ENCODE measurements at regions of chr16 and their contacts with region 1.

Region 1: GRCh38 chr16:3983081-3983520 is 102.6 kb upstream of the CREBBP start:
- DNase-seq: peak; percentile 79
- H3K4me3 ChIP-seq: no peak overlapping the region
- H3K27ac ChIP-seq: no peak overlapping the region
- H3K4me1 ChIP-seq: no peaks in the 10 kb centered on the region
- H3K27me3 ChIP-seq: no peaks in the 10 kb centered on the region
- CTCF ChIP-seq: peak in 3 of 4 experiments; percentile 74 to 88 (median 85)
- POLR2A ChIP-seq: no peak

Region 2: DNA sequence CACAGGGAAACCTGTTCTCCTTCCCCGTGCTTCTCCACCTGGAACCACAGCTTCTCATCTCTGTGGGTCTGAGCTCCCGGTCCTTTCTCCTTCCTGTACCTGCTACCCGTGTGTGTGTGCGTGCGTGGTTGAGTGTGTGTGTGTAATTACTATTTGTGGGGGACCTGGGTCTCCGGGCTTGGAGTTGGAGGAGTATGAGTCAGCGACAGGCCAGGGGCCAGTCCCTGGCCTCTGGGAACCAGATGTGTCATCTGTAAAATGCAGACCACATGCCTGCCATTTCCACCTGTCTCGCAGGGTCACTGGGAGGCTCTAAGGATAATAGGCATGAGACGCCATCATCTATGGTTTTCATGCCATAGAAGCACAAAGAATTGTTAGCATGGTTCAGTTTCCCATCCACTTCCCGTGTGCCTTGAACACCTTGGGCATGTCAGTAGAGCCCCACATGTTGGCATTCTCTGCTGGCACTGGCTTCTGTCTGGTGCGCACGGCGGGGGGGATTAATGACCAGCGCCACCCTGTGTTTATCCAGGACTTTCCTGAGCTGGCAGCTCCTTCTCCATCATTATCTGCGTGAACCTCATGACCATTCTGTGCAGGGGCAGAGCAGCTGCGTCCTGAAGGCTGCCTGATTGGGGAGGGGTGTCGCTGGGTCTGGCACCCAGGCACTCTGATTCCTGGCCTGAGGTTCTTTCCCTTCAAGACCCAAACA is 869.2 kb before region 1 on chr16:
- intact Hi-C with region 1: no loop called
- DNase-seq: no peak
- H3K4me3 ChIP-seq: peak overlapping the region in 1 of 2 donors; percentile 57
- H3K27ac ChIP-seq: no peak overlapping the region
- H3K4me1 ChIP-seq: peaks cover 8% of the 10 kb centered on the region
- H3K27me3 ChIP-seq: no peaks in the 10 kb centered on the region
- CTCF ChIP-seq: no peak
- POLR2A ChIP-seq: no peak

Region 3: DNA sequence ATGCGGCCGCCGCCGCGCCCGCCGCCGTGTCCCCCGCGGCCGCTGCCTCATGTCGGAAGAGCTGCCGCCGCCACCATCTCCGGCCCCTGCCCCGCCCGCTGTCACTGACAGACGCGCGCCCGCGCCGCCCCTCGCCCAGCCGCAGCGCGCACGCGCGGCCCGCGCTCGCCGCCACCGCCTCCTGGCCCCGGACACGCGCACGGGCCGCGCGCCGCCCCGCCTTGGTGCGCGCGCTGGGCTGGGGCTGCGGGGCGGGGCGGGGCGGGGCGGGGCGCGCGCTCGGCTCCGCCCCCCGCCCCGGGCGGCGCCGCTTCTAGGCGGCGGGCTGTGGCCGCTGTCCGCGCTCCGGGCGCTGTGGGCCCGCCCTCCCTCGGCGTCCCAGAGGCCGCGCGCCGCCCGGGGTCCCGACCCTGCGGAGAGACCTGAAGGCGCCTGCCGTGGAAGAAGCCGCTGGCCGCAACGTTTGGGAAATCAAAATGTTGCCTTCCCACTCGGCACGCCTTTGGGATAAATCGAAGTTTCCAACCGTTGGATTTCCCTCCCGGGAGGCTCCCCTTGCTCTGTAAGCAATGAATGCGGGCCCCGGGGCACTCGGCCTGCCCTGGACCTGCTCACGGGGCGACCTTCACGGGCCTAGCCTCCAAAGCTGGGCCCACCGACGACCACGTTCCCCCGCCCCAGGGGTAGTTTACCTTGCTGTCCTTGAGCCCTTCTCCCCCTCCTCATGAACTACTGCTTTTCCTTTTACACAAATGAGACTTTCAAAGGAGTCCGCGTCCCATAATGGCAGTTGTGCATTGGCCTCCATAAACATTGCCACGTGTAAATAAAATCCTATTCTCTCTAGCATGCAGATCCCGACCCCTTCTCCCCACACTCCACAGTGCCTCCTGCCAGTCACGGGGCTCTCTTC is 133.5 kb after region 1 on chr16 and contains the start of gene ADCY9:
- intact Hi-C with region 1: loop called (anchors 5 kb)
- DNase-seq: peak; percentile 75
- H3K4me3 ChIP-seq: peak within 1 kb of the TSS; percentile 44 to 49
- H3K27ac ChIP-seq: peak within 1 kb of the TSS; percentile 47 to 60
- H3K4me1 ChIP-seq: no peaks in the 10 kb centered on the region
- H3K27me3 ChIP-seq: no peaks in the 10 kb centered on the region
- CTCF ChIP-seq: peak in 1 of 4 experiments; percentile 8
- POLR2A ChIP-seq: peak; percentile 32
- total RNA-seq, gene ADCY9: 7.2 to 58.3 TPM

Region 4: GRCh38 chr16:4183237-4184036 is 200.3 kb after region 1 on chr16:
- intact Hi-C with region 1: loop called (anchors 5 kb)
- DNase-seq: peak; percentile 87
- H3K4me3 ChIP-seq: peak overlapping the region; percentile 62 to 73
- H3K27ac ChIP-seq: peak overlapping the region; percentile 91 to 98
- H3K4me1 ChIP-seq: no peaks in the 10 kb centered on the region
- H3K27me3 ChIP-seq: no peaks in the 10 kb centered on the region
- CTCF ChIP-seq: peak in 2 of 4 experiments; percentile 23 to 27
- POLR2A ChIP-seq: peak; percentile 84

Region 5: GRCh38 chr16:4330277-4330874 is 347.3 kb after region 1 on chr16:
- intact Hi-C with region 1: loop called (anchors 5 kb)
- DNase-seq: peak; percentile 69
- H3K4me3 ChIP-seq: no peak overlapping the region
- H3K27ac ChIP-seq: no peak overlapping the region
- H3K4me1 ChIP-seq: peaks cover 3% of the 10 kb centered on the region
- H3K27me3 ChIP-seq: no peaks in the 10 kb centered on the region
- CTCF ChIP-seq: peak; percentile 82 to 95 (median 93)
- POLR2A ChIP-seq: no peak

Measured in prostate gland (tissue), 2 donors.